Heart left ventricle (tissue), 16 donors: ENCODE measurements at regions of chr6 and their contacts with region 1.

Region 1: GRCh38 chr6:11428895-11429294 is 108.7 kb upstream of the TMEM170B start:
- DNase-seq: no peak
- ATAC-seq: no peak
- H3K4me3 ChIP-seq: no peak overlapping the region
- H3K27ac ChIP-seq: peak overlapping the region in 10 of 12 donors; percentile 6 to 66 (median 48)
- H3K4me1 ChIP-seq: peaks cover 0 to 51% (median 33%) of the 10 kb centered on the region in 12 donors
- H3K27me3 ChIP-seq: no peaks in the 10 kb centered on the region
- CTCF ChIP-seq: no peak
- POLR2A ChIP-seq: no peak

Region 2: GRCh38 chr6:11356404-11357155 is 72.3 kb before region 1 on chr6:
- intact Hi-C with region 1: loop called in 1 of 10 experiments (anchors 5 kb)
- DNase-seq: peak in 4 of 5 donors; percentile 49 to 70 (median 57)
- ATAC-seq: peak; percentile 75 to 90 (median 79)
- H3K4me3 ChIP-seq: no peak overlapping the region
- H3K27ac ChIP-seq: peak overlapping the region; percentile 63 to 97 (median 90)
- H3K4me1 ChIP-seq: peaks cover 0 to 63% (median 26%) of the 10 kb centered on the region in 12 donors
- H3K27me3 ChIP-seq: no peaks in the 10 kb centered on the region
- CTCF ChIP-seq: no peak
- POLR2A ChIP-seq: no peak